ENCODE measurements at regions of chr10 and their contacts with region 1.

Region 1: DNA sequence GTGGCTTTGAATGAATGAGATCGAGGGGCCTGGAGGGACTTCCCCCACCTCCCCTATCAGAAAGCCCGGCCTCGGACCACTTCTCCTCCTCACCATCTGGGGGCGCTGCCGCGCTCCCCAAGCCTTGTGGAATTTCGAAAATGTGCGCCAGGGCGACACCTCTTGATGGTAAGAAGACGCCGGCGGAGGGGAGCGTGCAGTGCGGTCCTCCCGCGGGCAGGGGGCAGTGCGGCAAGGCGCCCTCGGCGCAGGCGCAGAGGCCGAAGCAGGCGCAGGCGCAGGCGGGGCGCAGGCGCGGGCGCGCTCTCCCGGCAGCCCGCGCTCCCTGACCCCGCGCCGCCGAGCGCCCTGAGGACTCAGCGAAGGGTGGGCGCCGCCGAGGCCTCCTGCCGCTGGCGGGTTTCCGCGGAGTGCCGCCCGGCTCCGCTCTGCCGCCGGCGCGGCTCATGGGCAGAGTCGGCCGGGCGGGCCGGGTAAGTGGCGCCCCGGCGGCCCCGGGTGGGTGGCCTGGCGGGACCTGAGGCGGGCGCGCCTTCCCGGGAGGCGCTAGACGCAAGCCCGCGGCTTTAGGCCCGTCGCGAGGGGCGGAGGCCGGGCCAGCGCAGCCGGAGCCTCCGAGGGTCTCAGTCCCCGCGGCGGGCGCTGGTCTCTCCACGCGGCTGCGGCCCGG is at the start of gene RBM17:
- DNase-seq: peak; percentile 85 to 99 (median 90)

Region 2: DNA sequence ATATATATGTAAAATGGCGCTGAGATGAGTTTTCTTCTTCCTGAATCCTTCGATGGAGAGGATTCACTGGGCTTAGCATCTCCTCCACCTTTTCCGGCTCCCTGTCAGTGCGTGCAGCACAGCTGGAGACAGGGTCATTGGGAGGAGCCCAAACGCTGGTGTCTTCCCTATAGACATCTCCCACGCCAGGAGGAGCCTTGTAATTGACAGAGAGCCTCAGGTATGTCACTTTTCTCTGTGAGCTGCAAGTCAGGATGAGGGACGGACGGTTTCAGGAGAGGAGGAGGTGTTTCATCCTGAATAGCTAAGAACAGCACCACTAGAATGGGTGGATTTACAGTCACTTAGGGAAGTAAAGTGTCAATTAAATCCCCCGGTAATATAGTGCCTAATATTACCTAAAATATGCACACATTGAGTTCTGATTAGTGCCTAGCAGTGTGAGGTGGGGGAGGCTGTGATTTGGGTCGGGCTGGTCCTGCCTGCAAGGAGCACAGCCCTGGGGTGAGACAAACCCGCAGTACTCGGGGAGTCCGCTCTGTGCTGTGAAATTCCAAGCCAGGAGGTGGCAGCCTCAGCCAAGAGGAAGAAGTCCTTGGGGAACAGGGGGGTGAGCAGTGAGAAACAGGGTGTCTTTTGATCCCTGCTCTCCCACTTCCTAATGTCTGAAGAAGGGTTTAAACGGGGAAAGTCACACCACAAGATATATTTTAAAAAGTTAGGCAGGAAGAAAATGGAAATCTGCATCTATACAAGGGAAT is 139.7 kb before region 1 on chr10:
- intact Hi-C with region 1: loop called (anchors 2 kb)
- DNase-seq: peak; percentile 60 to 95 (median 74)

Region 3: GRCh38 chr10:6014241-6014761 is 74.6 kb before region 1 on chr10:
- intact Hi-C with region 1: loop called (anchors 1 kb)
- DNase-seq: peak in 4 of 10 donors; percentile 36 to 60 (median 48)